Activated B cell treated with CpG ODN at 0.5 μM for 24 hours (primary cell): ENCODE measurements at regions of chr4 and their contacts with region 1.

Region 1: DNA sequence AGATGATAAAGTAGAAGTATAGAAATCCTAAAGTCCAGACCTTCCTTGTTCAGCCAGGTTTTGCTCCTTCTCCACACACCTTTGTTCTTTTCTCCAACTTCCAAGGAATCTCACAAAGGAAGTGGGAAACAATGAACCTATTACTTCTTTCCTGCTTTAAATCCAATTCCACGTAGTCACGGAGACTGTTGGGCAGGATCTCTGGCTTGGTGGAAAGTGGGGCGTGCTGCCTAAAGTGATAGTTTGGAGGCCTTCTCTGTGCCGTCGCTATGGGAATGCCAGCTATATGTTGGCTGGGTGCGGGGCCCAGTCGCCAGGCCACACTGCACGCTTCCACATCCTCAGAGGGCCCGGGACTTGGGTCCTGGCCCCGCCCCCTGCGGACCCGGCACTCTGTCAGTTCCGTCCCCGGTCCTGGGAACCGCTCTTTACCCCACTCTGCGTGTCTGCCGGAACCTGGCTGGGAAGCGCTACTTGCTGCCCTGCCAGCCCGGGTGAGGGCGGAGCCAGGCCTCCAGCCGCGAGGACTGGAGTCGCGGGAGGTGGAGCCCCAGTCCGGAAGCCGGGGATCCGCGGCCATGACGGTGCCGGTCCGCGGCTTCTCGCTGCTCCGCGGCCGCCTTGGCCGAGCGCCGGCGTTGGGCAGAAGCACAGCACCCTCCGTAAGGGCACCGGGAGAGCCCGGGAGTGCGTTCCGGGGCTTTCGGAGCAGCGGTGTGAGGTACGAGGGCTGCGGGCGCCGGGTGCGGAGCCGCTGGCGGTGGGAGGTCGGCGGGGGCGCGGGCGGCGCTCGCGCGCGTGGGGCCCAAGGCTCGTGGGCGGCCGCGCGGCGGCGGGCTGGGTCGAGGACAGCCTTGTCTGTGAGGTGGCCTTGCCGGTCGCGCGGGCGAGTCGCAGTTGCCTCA is at the start of gene MTHFD2L:
- DNase-seq: peak; percentile 83
- ATAC-seq: peak; percentile 97
- H3K4me3 Mint-ChIP-seq: peak within 1 kb of the TSS; percentile 92
- H3K27ac Mint-ChIP-seq: peak within 1 kb of the TSS; percentile 80
- H3K4me1 Mint-ChIP-seq: peaks cover 18% of the 10 kb centered on the region
- H3K27me3 Mint-ChIP-seq: peaks cover 6% of the 10 kb centered on the region
- CTCF ChIP-seq: no peak
- total RNA-seq, gene MTHFD2L: 12.0 and 14.3 TPM in 2 replicates

Region 2: GRCh38 chr4:74189331-74190043 is 31.7 kb after region 1 on chr4:
- CTCF ChIA-PET with region 1: no interaction called
- POLR2A ChIA-PET with region 1: no interaction called
- intact Hi-C with region 1: no loop called
- DNase-seq: no peak
- ATAC-seq: peak; percentile 56
- H3K4me3 Mint-ChIP-seq: no peak overlapping the region
- H3K27ac Mint-ChIP-seq: no peak overlapping the region
- H3K4me1 Mint-ChIP-seq: no peaks in the 10 kb centered on the region
- H3K27me3 Mint-ChIP-seq: no peaks in the 10 kb centered on the region
- CTCF ChIP-seq: no peak

Region 3: DNA sequence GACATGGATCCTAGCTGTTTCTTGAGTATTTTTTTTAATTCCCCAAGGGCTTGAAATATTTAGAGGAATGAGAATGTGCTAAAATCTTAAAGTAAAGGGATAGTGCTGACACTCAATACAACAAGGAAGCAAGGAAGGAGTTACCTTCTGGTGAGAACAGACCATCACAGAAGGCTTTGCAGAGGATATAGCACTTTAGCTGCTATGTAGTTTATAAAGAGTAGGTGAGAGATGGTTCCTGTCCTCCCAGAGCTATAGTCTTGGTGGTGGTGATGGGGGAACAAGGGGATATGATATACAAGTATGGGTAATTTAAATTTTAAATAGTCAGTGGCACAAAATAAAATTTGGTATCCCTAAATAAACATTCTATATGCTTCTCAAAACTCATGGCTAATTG is 47.7 kb after region 1 on chr4:
- CTCF ChIA-PET with region 1: no interaction called
- POLR2A ChIA-PET with region 1: no interaction called
- intact Hi-C with region 1: loop called (anchors 1 kb)
- DNase-seq: no peak
- ATAC-seq: no peak
- H3K4me3 Mint-ChIP-seq: no peak overlapping the region
- H3K27ac Mint-ChIP-seq: peak overlapping the region; percentile 94
- H3K4me1 Mint-ChIP-seq: peaks cover 27% of the 10 kb centered on the region
- H3K27me3 Mint-ChIP-seq: no peaks in the 10 kb centered on the region
- CTCF ChIP-seq: no peak

Region 4: GRCh38 chr4:74258963-74259362 is 101.2 kb after region 1 on chr4:
- CTCF ChIA-PET with region 1: no interaction called
- POLR2A ChIA-PET with region 1: no interaction called
- intact Hi-C with region 1: no loop called
- DNase-seq: no peak
- ATAC-seq: no peak
- H3K4me3 Mint-ChIP-seq: no peak overlapping the region
- H3K27ac Mint-ChIP-seq: no peak overlapping the region
- H3K4me1 Mint-ChIP-seq: no peaks in the 10 kb centered on the region
- H3K27me3 Mint-ChIP-seq: no peaks in the 10 kb centered on the region
- CTCF ChIP-seq: no peak

Region 5: DNA sequence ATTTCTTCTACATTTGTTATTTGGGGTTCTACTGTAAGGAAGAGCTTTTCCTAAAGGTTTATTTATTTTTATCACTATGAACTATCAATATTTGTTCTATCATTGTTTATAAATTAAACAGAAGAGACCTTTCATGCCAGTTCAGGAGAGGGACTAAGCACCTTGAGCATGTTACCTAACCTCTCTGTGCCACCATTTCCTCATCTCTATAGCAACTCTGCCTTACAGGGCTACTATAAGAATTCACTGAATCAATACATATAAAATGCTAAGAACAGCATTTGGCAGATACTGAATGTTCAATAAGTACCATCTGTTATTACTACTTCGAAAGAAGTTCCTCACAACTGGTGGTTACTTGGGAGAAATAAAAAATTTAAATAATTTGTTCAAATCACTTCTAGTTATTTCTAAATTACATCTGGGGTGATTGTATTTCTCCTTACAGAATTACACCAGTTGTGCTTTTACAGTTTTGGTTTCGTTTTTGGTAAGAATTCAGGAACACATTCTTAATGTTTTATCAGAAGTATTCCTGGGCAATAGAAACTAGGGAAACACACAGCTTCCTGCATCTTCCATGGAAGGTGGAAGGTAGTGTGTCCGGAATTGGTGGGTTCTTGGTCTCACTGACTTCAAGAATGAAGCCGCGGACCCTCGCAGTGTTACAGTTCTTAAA is 240.1 kb after region 1 on chr4:
- CTCF ChIA-PET with region 1: no interaction called
- POLR2A ChIA-PET with region 1: no interaction called
- intact Hi-C with region 1: loop called (anchors 2 kb)
- DNase-seq: no peak
- ATAC-seq: peak; percentile 68
- H3K4me3 Mint-ChIP-seq: peak overlapping the region; percentile 99
- H3K27ac Mint-ChIP-seq: peak overlapping the region; percentile 98
- H3K4me1 Mint-ChIP-seq: peaks cover 20% of the 10 kb centered on the region
- H3K27me3 Mint-ChIP-seq: no peaks in the 10 kb centered on the region
- CTCF ChIP-seq: no peak